ENCODE measurements at regions of chr18 and their contacts with region 1.

Region 1: DNA sequence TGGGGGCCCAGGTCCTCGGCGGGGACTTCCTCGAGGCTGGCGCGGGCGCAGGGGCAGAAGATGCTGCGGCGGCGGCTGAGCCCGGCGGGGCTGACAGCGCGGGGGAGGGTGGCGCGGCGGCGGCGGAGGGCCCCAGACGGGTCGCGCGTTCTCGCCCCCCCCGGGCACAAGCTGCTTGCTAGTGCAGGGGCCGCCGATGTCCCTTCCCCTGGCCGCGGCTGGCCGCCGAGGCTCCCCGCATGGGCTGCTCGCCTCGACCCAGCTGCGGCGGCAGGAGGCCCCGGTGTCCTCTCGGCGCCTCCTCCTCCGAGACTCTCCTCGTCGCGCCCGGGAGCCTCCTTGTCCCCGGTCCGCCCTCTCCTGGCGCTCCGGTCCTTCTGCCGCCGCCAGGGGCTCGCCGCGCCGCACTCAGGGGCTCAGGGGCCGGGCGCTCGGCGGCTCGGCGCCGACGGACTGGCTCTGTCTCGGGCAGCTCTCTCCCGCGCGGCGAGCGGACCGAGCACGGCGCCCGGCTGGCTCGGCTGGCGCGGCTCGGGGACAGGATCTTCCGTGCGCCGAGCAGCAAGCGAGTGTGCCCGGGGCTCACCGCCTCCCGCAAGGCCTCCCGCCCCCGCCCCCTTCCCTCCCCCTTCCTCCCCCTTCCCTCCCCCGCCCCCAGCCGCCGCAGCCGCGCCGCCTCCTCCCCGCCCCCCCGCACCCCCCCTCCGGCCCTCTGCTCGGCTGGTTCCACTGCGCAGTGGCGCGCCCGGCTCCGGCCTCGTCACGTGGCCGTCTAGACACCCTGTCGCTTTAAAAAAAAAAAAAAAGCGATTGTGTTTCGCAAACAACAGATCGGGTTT is 902 bp upstream of the SMAD7 start:
- DNase-seq: peak; percentile 88 to 95 (median 91)
- H3K4me3 ChIP-seq: peak overlapping the region; percentile 38 to 91 (median 74)
- H3K27ac ChIP-seq: peak overlapping the region; percentile 97 to 100 (median 99)
- H3K4me1 ChIP-seq: peaks cover 17 to 33% of the 10 kb centered on the region in 2 donors
- H3K27me3 ChIP-seq: no peaks in the 10 kb centered on the region
- CTCF ChIP-seq: peak in 4 of 6 experiments; percentile 10 to 59 (median 38)
- POLR2A ChIP-seq: peak; percentile 84

Region 2: DNA sequence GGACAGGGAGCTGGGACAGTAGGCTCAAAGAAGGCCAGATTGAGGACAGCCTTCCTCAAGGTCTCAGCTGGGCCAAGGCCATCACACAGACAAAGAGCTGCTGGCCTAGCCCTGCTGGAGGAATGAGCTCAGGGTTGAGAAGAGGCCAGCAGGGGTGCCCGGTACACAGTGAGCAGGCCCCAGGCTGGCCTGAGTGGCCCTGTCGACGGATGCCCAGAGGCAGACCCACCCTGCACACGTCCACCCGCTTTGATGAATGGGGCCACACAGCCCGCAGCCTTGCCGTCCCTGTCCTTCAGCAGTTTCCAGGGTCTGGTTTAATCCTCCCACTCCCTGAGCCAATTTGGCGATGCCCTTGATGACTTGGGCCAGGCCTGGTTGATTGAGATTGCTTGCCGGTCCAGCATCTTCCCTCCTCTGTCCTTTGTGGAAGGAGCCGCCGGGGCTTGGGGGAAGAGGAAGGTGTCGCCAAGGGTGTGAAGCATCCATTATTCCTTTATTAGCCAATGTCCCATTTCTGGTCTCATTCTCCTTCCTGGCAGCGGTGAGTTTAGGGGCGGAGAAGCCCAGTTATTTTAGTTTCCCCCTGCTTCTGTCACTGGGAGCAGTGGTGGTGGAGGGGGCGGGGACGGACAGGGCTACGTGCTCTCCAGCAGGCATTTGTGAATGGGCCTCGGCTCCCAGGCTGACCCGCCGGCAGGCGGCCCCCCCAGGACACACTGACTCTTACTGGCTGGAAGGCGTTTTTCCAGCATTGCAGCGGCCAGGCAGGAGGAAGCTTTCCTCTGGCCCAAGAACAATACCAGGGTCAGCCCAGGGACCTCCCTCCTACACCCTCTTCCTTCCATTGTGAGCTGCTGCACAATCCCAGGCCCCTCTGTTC is 271.1 kb before region 1 on chr18:
- intact Hi-C with region 1: loop called (anchors 10 kb)
- DNase-seq: peak; percentile 56 to 89 (median 74)
- H3K4me3 ChIP-seq: no peak overlapping the region
- H3K27ac ChIP-seq: peak overlapping the region; percentile 22 to 82 (median 60)
- H3K4me1 ChIP-seq: peaks cover 31 to 47% of the 10 kb centered on the region in 2 donors
- H3K27me3 ChIP-seq: no peaks in the 10 kb centered on the region
- CTCF ChIP-seq: peak in 2 of 6 experiments; percentile 20 to 25
- POLR2A ChIP-seq: no peak

Region 3: DNA sequence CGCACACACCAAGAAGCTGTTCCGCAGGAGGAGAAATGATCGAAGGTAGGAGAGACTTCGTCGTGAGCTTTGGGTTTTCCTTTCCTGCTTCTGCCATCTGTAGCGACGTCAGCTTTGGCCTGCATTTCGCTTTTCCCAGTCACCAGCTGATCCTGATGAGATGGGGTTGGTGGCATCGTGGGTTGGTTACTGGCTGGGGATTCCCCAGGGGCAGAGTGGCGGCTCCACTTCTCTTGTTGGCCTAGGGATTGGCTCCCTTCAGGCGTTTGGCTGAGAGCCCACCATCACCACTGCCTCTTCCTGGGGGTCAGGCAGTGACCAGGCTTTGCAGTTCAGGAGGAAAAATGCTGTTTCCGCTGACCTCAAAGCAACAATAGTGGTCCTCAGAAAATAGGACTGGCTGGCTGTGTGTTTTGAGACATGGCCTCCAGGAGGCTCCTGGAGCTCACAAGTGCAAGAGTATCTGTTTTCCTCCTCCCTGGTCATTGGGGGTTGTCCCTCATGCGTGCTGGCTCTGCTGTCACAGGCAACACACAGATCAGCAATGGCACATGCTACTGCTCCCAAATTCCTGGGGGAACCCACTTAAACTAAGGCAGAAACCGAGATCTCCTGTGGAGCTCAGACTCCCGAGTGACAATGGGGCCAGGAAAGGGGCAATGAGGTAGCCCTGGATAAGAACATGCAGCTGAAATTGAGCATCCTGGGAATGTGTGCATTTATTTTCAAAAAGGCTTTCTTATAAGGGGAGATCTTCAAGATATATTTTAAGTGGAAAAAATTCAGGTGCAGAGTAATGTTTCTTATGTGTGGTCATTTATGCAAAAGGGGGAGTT is 239.8 kb before region 1 on chr18:
- intact Hi-C with region 1: no loop called
- DNase-seq: peak in 1 of 7 donors; percentile 73
- H3K4me3 ChIP-seq: no peak overlapping the region
- H3K27ac ChIP-seq: peak overlapping the region in 1 of 5 donors; percentile 49
- H3K4me1 ChIP-seq: peaks cover 0 to 35% of the 10 kb centered on the region in 2 donors
- H3K27me3 ChIP-seq: no peaks in the 10 kb centered on the region
- CTCF ChIP-seq: peak in 4 of 6 experiments; percentile 19 to 57 (median 38)
- POLR2A ChIP-seq: no peak

Region 4: DNA sequence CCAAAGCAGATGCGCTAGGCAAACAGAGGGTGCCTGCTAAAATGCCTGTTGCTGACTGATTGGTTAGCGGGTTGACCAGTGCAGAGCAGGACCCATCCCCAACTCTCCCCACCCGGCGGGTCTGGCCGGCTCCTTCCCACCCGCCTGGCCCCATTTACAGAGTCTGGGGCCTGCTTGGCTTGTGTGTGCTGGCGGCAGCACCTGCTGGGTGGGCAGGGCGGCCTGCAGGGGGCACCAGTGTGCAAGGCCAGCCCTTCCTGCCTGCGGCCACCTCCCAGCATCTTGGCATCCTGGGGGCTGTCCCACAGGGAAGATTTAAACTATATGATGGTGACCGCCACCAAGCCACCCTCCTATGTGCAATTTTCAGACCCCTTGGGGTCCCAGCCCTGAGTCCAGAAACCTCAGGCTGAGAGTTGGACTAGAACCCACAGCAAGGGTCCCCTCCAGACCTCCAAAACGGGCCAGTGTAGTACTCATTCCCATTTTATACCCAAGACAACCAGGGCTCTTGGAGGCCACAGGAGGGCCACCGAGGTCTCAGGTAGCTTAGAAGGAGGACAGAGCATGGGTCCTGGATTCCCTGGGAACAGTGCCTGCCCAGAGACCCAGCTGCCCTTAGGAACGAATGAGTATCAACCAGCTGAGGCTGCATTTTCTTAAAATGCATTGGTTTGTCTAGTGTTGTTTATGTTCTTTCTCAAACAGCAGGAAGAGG is 174.5 kb before region 1 on chr18:
- intact Hi-C with region 1: loop called (anchors 5 to 10 kb)
- DNase-seq: peak; percentile 34 to 75 (median 53)
- H3K4me3 ChIP-seq: no peak overlapping the region
- H3K27ac ChIP-seq: peak overlapping the region in 1 of 5 donors; percentile 59
- H3K4me1 ChIP-seq: peaks cover 6 to 41% of the 10 kb centered on the region in 2 donors
- H3K27me3 ChIP-seq: no peaks in the 10 kb centered on the region
- CTCF ChIP-seq: peak; percentile 68 to 86 (median 76)
- POLR2A ChIP-seq: no peak

Region 5: GRCh38 chr18:48834413-48835031 is 117.1 kb before region 1 on chr18:
- intact Hi-C with region 1: loop called in 1 of 2 experiments (anchors 10 kb)
- DNase-seq: peak; percentile 82 to 96 (median 94)
- H3K4me3 ChIP-seq: no peak overlapping the region
- H3K27ac ChIP-seq: peak overlapping the region in 3 of 5 donors; percentile 30 to 75 (median 73)
- H3K4me1 ChIP-seq: peaks cover 12 to 52% of the 10 kb centered on the region in 2 donors
- H3K27me3 ChIP-seq: no peaks in the 10 kb centered on the region
- CTCF ChIP-seq: no peak
- POLR2A ChIP-seq: peak in 1 of 2 donors; percentile 64

Measured in adrenal gland (tissue), 19 donors.